A549 (cell line): ENCODE measurements at regions of chr17 and their contacts with region 1.

Region 1: GRCh38 chr17:58447039-58447975 is 30.0 kb upstream of the RNF43 start:
- DNase-seq: peak; percentile 83 to 92
- ATAC-seq: peak; percentile 100
- H3K4me3 ChIP-seq: no peak overlapping the region
- H3K27ac ChIP-seq: no peak overlapping the region
- H3K4me1 ChIP-seq: no peaks in the 10 kb centered on the region
- CTCF ChIP-seq: peak; percentile 99
- EP300 ChIP-seq: no peak
- POLR2A ChIP-seq: no peak
- RAD21 ChIP-seq: peak; percentile 99 to 100

Region 2: DNA sequence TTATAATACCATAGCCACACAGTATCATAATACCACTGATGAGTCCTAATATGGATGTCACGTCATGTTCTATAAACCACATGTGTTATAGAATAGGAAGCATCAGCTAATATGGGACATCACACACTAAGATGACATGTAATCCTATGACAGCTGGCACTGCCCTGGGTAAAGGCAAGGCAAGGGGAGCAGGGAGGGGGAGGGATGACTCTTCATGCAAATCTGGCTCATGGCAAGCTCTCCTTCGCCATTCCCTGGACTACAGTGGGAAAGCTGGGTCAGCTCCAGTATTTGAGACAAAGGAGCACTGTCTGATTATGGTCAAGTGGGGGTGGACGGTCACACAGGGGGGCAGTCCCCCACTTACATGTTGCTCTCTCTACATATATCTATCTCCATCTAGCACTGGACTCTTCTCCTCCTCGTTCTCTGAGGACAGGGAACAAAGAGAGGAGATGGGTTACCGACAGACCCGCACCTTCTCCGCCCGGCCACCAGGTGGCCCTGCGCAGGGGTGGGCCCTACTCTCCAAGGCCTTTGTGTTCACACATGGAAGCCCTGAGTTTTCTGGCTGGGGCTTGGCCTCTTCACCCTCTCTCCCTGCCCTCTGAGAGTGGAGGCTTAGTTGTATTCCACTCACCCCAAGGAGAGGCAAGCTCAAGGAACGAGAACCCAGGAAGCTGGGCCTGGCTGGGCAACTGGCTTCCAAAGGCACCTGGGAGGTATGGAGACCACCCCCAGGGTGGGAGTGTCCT is 143.2 kb before region 1 on chr17:
- CTCF ChIA-PET with region 1: interaction called, 315 read pairs
- POLR2A ChIA-PET with region 1: no interaction called
- DNase-seq: peak; percentile 63 to 93
- ATAC-seq: peak; percentile 70 to 90; a peak in 5 of 6 replicates
- H3K4me3 ChIP-seq: no peak overlapping the region
- H3K27ac ChIP-seq: no peak overlapping the region
- H3K4me1 ChIP-seq: no peaks in the 10 kb centered on the region
- CTCF ChIP-seq: peak; percentile 59
- EP300 ChIP-seq: no peak
- POLR2A ChIP-seq: no peak
- RAD21 ChIP-seq: peak; percentile 30 to 55; a peak in 3 of 5 replicates

Region 3: GRCh38 chr17:58344047-58344790 is 103.1 kb before region 1 on chr17:
- CTCF ChIA-PET with region 1: interaction called, 11 read pairs
- POLR2A ChIA-PET with region 1: no interaction called
- DNase-seq: no peak
- ATAC-seq: peak; percentile 20 to 37; a peak in 3 of 6 replicates
- H3K4me3 ChIP-seq: no peak overlapping the region
- H3K27ac ChIP-seq: no peak overlapping the region
- H3K4me1 ChIP-seq: no peaks in the 10 kb centered on the region
- CTCF ChIP-seq: no peak
- EP300 ChIP-seq: no peak
- POLR2A ChIP-seq: no peak
- RAD21 ChIP-seq: no peak

Region 4: GRCh38 chr17:58352014-58352842 is 95.1 kb before region 1 on chr17 and contains the start of gene SUPT4H1:
- CTCF ChIA-PET with region 1: interaction called, 14 read pairs
- POLR2A ChIA-PET with region 1: no interaction called
- DNase-seq: peak; percentile 95 to 99
- ATAC-seq: peak; percentile 97 to 99
- H3K4me3 ChIP-seq: peak within 1 kb of the TSS; percentile 83
- H3K27ac ChIP-seq: peak within 1 kb of the TSS; percentile 88 to 92
- H3K4me1 ChIP-seq: peaks cover 9% of the 10 kb centered on the region; the same call in 2 of the 3 replicates
- CTCF ChIP-seq: peak; percentile 4; the same call in 1 of the 3 replicates
- EP300 ChIP-seq: no peak; a peak in 1 of 5 replicates
- POLR2A ChIP-seq: peak; percentile 92
- RAD21 ChIP-seq: peak in 1 of 2 experiments; percentile 68; a peak in 3 of 5 replicates
- polyA plus RNA-seq, gene SUPT4H1: 241 and 260 TPM in 2 replicates

Region 5: GRCh38 chr17:58432806-58433572 is 14.3 kb before region 1 on chr17:
- CTCF ChIA-PET with region 1: interaction called, 51 read pairs
- POLR2A ChIA-PET with region 1: no interaction called
- DNase-seq: no peak
- ATAC-seq: no peak
- H3K4me3 ChIP-seq: no peak overlapping the region
- H3K27ac ChIP-seq: no peak overlapping the region
- H3K4me1 ChIP-seq: no peaks in the 10 kb centered on the region
- CTCF ChIP-seq: no peak
- EP300 ChIP-seq: no peak
- POLR2A ChIP-seq: no peak
- RAD21 ChIP-seq: no peak

Region 6: GRCh38 chr17:58463821-58464220 is 16.5 kb after region 1 on chr17:
- CTCF ChIA-PET with region 1: interaction called, 16 read pairs
- POLR2A ChIA-PET with region 1: no interaction called
- DNase-seq: no peak
- ATAC-seq: no peak
- H3K4me3 ChIP-seq: no peak overlapping the region
- H3K27ac ChIP-seq: no peak overlapping the region
- H3K4me1 ChIP-seq: no peaks in the 10 kb centered on the region
- CTCF ChIP-seq: no peak
- EP300 ChIP-seq: no peak
- POLR2A ChIP-seq: no peak
- RAD21 ChIP-seq: no peak

Region 7: GRCh38 chr17:58513965-58514774 is 66.9 kb after region 1 on chr17 and contains the start of gene MTMR4:
- CTCF ChIA-PET with region 1: no interaction called
- POLR2A ChIA-PET with region 1: no interaction called
- DNase-seq: peak; percentile 62 to 84
- ATAC-seq: peak; percentile 25 to 37; a peak in 5 of 6 replicates
- H3K4me3 ChIP-seq: peak within 1 kb of the TSS; percentile 71
- H3K27ac ChIP-seq: peak within 1 kb of the TSS; percentile 78 to 88
- H3K4me1 ChIP-seq: peaks cover 15% of the 10 kb centered on the region
- CTCF ChIP-seq: no peak
- EP300 ChIP-seq: no peak
- POLR2A ChIP-seq: peak; percentile 52
- RAD21 ChIP-seq: no peak
- polyA plus RNA-seq, gene MTMR4: 20.0 and 27.3 TPM in 2 replicates